Naive thymus-derived CD8-positive, alpha-beta T cell (primary cell): ENCODE measurements at regions of chr20 and their contacts with region 1.

Region 1: GRCh38 chr20:64255361-64256281 is at the start of gene PCMTD2:
- DNase-seq: peak; percentile 76 to 89 (median 86)
- ATAC-seq: peak; percentile 87 to 88
- H3K4me3 Mint-ChIP-seq: peak within 1 kb of the TSS; percentile 91 to 98 (median 94)
- H3K27ac Mint-ChIP-seq: peak within 1 kb of the TSS; percentile 90 to 98 (median 96)
- H3K4me1 Mint-ChIP-seq: peaks cover 30 to 59% (median 57%) of the 10 kb centered on the region in 4 donors
- H3K27me3 Mint-ChIP-seq: peaks cover 0 to 12% (median 2%) of the 10 kb centered on the region in 5 donors
- polyA plus RNA-seq, gene PCMTD2: 63.1 to 80.2 (median 74.4) TPM

Region 2: GRCh38 chr20:64121586-64121985 is 134.0 kb before region 1 on chr20:
- POLR2A ChIA-PET with region 1: no interaction called
- DNase-seq: peak in 2 of 10 donors; percentile 4 to 15
- ATAC-seq: no peak
- H3K4me3 Mint-ChIP-seq: no peak overlapping the region
- H3K27ac Mint-ChIP-seq: no peak overlapping the region
- H3K4me1 Mint-ChIP-seq: peaks cover 7 to 9% (median 9%) of the 10 kb centered on the region in 4 donors
- H3K27me3 Mint-ChIP-seq: peaks cover 0 to 10% (median 2%) of the 10 kb centered on the region in 5 donors

Region 3: DNA sequence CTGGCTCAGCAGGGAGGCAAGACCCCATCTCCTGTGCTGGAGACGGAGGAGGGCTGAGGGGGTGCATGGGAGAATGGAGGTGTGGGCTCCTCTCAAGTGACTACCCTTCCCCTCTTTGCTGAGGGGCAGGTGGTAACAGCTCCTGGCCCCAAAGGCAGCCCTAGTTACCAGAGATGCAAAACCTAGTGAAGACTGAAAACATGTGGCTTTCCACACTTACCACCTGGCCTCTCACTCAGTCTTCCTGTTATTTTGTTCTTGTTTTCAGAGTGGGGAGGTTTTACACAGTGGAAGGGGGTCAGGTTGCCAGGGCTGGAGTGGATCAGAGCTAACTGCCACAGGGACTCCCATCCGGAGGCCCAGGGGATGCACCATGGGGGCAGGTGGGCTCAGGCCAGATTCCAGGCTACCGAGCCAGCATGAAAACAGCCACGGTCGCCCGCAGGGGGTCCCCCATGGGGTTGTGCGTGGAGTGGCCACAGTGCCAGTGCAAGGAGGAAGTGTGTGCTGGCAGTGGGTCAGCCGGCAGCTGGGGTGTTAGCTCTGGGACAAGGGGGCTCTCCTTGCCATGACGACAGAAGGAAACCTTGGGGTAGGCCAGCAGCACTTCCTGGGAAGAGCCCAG is 70.2 kb before region 1 on chr20:
- POLR2A ChIA-PET with region 1: interaction called, 10 read pairs
- DNase-seq: no peak
- ATAC-seq: peak; percentile 25 to 44
- H3K4me3 Mint-ChIP-seq: peak overlapping the region in 3 of 10 donors; percentile 21 to 74 (median 49)
- H3K27ac Mint-ChIP-seq: peak overlapping the region in 7 of 10 donors; percentile 67 to 90 (median 74)
- H3K4me1 Mint-ChIP-seq: peaks cover 12 to 31% (median 16%) of the 10 kb centered on the region in 4 donors
- H3K27me3 Mint-ChIP-seq: peaks cover 0 to 23% (median 4%) of the 10 kb centered on the region in 5 donors

Region 4: DNA sequence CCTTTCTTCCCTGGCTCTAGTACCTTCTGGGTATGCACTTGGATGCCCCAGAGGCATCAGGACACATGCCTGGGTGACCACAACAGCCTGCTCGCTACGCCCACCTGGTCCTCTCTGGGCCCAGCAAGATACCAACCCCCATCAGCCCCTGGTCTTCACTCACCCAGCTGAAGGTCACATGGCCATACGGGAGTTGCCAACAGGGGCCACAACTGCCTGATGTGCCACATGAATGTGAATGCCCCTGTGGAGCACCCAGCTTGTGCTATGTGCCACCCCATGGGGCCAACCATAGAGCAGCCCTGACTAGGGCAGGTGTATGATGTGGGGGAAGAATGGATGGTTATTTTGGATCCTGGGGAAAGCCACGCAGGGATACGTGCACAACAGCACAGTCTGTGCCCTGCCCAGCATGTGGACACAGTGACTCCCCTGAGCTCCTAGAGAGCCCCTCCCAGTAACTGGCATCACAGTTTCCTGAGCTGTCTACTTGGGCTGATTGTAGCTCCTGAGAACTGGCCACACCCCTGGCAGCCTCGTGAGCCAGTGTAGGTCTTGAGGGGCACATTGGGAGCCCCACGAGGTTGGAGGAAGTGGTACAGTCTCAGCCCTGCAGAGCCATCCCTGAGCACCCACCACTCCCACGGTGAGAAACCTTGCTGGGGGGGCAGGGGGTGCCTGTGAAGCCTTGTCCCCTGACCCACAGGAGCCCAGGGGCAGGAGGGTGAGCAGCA is 10.6 kb before region 1 on chr20:
- POLR2A ChIA-PET with region 1: interaction called, 10 read pairs
- DNase-seq: peak in 2 of 10 donors; percentile 22 to 34
- ATAC-seq: peak; percentile 41 to 97
- H3K4me3 Mint-ChIP-seq: peak overlapping the region in 1 of 10 donors; percentile 54
- H3K27ac Mint-ChIP-seq: peak overlapping the region in 1 of 10 donors; percentile 73
- H3K4me1 Mint-ChIP-seq: peaks cover 0 to 15% (median 6%) of the 10 kb centered on the region in 4 donors
- H3K27me3 Mint-ChIP-seq: peaks cover 3 to 23% (median 10%) of the 10 kb centered on the region in 5 donors